Mammary epithelial cell (primary cell): ENCODE measurements at regions of chr11 and their contacts with region 1.

Region 1: GRCh38 chr11:92101920-92102319 is 122.7 kb upstream of the FAT3 start:
- DNase-seq: no peak
- H3K4me3 ChIP-seq: no peak overlapping the region
- H3K27ac ChIP-seq: no peak overlapping the region
- H3K4me1 ChIP-seq: no peaks in the 10 kb centered on the region
- H3K27me3 ChIP-seq: no peaks in the 10 kb centered on the region
- CTCF ChIP-seq: no peak

Region 2: GRCh38 chr11:92152245-92152644 is 50.3 kb after region 1 on chr11:
- CTCF ChIA-PET with region 1: no interaction called
- dilution Hi-C with region 1: loop called (anchors 5 kb)
- in situ Hi-C with region 1: no loop called
- intact Hi-C with region 1: no loop called
- DNase-seq: no peak
- H3K4me3 ChIP-seq: no peak overlapping the region
- H3K27ac ChIP-seq: no peak overlapping the region
- H3K4me1 ChIP-seq: no peaks in the 10 kb centered on the region
- H3K27me3 ChIP-seq: no peaks in the 10 kb centered on the region
- CTCF ChIP-seq: no peak

Region 3: DNA sequence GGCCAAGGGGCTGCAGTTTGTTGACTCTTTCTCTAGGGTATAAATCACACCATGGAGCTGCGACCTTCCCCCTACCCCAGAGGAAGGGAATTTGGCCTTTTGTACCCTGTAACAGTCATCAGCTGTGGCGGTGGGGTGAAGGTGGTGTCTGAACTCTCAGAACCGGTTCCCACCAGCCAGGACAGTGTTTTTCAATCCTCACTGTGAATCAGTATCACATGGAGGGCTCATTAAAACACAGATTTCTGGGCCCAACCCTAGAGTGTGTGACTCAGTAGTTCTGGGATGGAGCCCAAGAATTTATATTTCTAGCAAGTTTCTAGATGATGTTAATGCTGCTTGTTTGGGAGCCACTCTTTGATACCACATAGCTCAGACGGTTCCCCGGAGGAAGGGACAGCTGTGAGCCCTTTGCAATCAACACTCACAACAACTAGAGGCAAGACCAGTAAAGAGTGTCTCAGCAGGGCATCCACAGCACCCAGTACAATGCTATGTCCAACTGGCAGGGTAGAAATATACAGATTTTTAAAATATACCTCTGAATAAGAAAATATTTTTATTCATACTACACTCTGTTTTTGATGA is 78.8 kb after region 1 on chr11:
- CTCF ChIA-PET with region 1: no interaction called
- dilution Hi-C with region 1: loop called (anchors 5 kb)
- in situ Hi-C with region 1: no loop called
- intact Hi-C with region 1: no loop called
- DNase-seq: peak; percentile 82
- H3K4me3 ChIP-seq: no peak overlapping the region
- H3K27ac ChIP-seq: no peak overlapping the region
- H3K4me1 ChIP-seq: no peaks in the 10 kb centered on the region
- H3K27me3 ChIP-seq: no peaks in the 10 kb centered on the region
- CTCF ChIP-seq: no peak